ENCODE measurements at regions of chr3 and their contacts with region 1.

Region 1: DNA sequence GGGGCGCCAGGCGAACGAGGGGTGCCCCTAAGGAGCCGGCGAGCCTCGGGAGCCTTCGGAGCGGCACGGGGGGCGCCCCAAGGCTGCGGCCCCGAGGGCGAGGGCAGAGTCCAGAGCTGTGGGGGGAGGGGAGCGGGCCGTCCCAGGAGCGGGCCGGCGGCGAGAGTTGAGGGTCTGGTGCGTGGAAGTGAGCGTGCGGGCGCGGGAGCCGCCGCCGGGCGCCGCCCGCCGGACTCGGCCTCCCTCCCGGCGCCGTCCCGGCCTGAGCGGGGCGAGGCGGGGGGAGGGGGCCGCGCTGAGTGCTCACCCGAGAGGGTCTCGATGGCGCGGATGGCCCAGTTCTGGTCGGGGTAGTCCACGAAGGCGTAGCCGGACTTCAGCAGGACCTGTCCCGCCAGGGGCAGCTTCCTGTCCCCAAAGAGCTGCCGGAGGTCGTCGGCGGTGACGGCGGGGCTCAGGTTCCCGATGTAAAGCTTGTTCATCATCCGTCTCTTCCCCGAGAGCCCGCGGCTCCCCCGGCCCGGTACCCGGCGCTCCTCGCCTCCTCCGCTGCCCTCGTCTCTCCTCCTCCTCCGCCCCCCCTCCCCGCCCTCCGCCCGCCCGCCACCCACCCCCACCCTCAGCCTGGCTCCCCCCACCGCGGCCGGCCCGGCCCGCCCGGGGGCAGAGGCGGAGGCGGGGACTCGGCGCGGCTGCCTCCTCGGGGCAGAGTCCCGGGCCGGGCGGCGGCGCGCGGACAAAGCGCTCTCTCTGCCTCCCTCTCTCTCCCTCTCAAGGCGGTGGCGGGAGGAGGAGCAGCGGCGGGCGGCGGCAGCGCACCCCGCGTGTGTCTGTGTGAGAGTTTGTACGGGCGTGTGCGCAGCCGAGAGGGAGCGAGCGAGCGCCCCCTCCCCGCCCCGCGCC is at the start of gene IGF2BP2:
- DNase-seq: peak; percentile 73 to 96
- H3K4me3 ChIP-seq: peak within 1 kb of the TSS; percentile 99
- H3K27ac ChIP-seq: peak within 1 kb of the TSS; percentile 86
- H3K4me1 ChIP-seq: peaks cover 40% of the 10 kb centered on the region
- H3K27me3 ChIP-seq: no peaks in the 10 kb centered on the region
- CTCF ChIP-seq: no peak
- total RNA-seq, gene IGF2BP2: 140 and 150 TPM in 2 replicates

Region 2: GRCh38 chr3:185733980-185734724 is 90.6 kb before region 1 on chr3:
- CTCF ChIA-PET with region 1: interaction called, 8 read pairs
- POLR2A ChIA-PET with region 1: interaction called, 11 read pairs
- intact Hi-C with region 1: loop called (anchors 1 kb)
- DNase-seq: peak; percentile 73 to 85
- H3K4me3 ChIP-seq: no peak overlapping the region
- H3K27ac ChIP-seq: peak overlapping the region; percentile 23
- H3K4me1 ChIP-seq: peaks cover 65% of the 10 kb centered on the region
- H3K27me3 ChIP-seq: no peaks in the 10 kb centered on the region
- CTCF ChIP-seq: peak; percentile 90

Region 3: DNA sequence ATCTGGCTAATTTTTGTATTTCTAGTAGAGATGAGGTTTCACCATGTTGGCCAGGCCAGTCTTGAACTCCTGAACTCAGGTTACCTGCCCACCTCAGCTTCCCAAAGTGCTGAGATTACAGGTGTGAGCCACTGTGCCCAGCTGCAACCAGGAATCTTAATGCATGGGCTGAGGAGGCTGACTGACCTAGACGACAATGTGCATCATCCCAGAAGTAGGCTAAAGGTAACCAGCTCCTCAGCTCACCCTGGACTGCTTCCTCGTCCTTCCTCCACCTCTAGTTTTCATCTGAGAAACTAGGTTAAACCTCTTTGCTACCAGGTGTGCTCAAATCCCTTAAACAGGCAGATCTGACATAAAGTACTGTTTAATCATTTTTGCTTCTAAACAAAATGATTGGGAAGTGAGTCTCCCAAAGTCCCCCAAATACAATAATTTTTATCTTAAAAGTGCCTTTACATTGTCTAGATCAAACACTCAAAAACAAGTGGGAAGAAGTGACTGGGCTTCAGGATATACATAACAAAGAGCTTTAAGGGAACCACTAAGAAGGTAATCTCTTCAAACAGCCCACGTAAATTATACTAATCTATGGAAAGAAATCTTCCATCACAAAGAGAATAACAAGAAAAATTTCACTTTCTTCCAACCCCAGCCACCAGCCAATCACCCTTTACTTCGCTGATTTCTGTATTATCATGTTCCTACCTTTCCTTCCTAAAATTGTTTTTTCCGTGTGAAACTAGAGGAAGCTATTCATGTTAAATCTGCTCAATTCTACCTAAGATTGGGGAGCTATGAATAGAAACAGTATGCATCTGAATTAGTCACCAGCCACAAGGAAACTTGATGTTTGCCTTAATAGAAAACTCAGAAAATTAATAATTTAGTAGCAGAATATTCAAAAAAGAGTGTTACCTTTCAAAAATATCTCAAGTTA is 34.6 kb before region 1 on chr3:
- CTCF ChIA-PET with region 1: no interaction called
- POLR2A ChIA-PET with region 1: interaction called, 6 read pairs
- intact Hi-C with region 1: loop called (anchors 5 kb)
- DNase-seq: peak; percentile 46 to 76
- H3K4me3 ChIP-seq: peak overlapping the region; percentile 1; the same call in 1 of the 2 replicates
- H3K27ac ChIP-seq: peak overlapping the region; percentile 59
- H3K4me1 ChIP-seq: peaks cover 69% of the 10 kb centered on the region
- H3K27me3 ChIP-seq: no peaks in the 10 kb centered on the region
- CTCF ChIP-seq: no peak

Region 4: GRCh38 chr3:185878920-185879319 is 54.2 kb after region 1 on chr3:
- CTCF ChIA-PET with region 1: no interaction called
- POLR2A ChIA-PET with region 1: interaction called, 23 read pairs
- intact Hi-C with region 1: no loop called
- DNase-seq: peak; percentile 65 to 72
- H3K4me3 ChIP-seq: no peak overlapping the region
- H3K27ac ChIP-seq: no peak overlapping the region
- H3K4me1 ChIP-seq: peaks cover 12% of the 10 kb centered on the region
- H3K27me3 ChIP-seq: no peaks in the 10 kb centered on the region
- CTCF ChIP-seq: no peak

Region 5: DNA sequence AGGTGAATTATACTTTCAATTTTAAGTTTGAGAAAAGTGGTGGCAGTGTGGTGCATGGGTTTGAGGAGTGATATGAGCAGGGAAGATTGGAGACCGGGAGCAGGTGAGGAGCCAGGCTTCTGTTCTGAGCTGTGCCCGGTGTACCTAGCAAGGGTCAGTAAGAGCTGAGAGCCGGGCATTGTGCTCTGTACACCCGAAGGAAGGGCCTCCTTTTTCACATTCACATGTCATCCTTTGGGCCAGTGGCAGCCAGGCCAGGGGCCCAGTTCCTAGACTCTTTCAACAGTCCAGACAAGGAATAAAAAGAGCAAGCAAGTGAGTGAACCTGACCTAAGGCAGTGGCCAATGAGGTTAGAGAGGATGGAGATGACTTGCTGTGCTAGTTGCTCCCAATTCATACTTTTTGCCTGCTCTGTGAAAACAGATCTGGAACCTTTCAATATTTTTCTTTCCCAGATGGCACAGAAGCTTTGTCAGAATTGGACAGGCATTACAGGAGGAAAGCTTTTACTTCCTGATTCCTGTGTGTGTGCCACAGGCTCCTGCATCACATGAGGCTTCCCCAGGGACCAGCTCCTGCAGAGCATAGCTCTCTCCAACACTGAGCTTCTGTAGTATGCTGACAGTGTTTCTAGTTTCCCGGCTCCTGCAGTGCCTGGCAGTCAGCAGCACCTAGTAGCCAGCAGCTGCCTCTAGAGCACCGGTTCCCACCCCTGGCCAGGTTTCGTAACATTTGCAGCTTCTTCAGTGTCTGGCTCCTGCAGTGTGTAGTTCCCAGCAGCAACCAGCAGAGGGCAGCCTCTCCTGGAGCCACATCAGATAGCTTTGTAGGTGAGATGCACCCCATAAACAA is 118.4 kb after region 1 on chr3:
- CTCF ChIA-PET with region 1: interaction called, 9 read pairs
- POLR2A ChIA-PET with region 1: interaction called, 9 read pairs
- intact Hi-C with region 1: loop called (anchors 1 kb)
- DNase-seq: peak; percentile 86 to 93
- H3K4me3 ChIP-seq: no peak overlapping the region; the same call in 1 of the 2 replicates
- H3K27ac ChIP-seq: no peak overlapping the region
- H3K4me1 ChIP-seq: peaks cover 48% of the 10 kb centered on the region
- H3K27me3 ChIP-seq: no peaks in the 10 kb centered on the region
- CTCF ChIP-seq: peak; percentile 100

Measured in PC-9 (cell line).